ENCODE measurements at regions of chr7 and their contacts with region 1.

Region 1: DNA sequence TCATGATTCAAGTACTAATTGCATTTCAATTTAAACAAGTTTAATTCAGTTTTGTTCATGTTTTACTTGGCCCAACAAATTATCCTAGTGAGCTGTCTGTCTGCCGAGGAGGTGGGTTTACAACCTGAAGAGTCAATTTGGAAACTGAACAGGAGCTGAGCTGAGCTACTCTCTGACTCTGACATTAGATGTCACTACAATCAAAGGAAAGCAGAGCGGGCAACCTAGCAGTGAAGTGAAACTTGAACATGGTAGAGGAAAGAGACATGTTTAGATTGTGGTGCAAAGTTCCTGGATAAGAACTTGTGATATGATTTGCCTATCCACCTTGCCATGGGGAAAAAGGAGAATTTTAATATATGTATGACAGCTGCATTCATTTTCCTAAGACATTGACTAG is 9.6 kb upstream of the AGR3 start:
- DNase-seq: peak; percentile 64 to 74
- H3K4me3 ChIP-seq: no peak overlapping the region
- H3K4me3 Mint-ChIP-seq: no peak overlapping the region
- H3K27ac Mint-ChIP-seq: peak overlapping the region; percentile 35
- H3K4me1 ChIP-seq: peaks cover 31% of the 10 kb centered on the region
- H3K4me1 Mint-ChIP-seq: peaks cover 14% of the 10 kb centered on the region
- H3K27me3 ChIP-seq: no peaks in the 10 kb centered on the region
- H3K27me3 Mint-ChIP-seq: no peaks in the 10 kb centered on the region
- CTCF ChIP-seq: peak; percentile 46 to 75

Region 2: DNA sequence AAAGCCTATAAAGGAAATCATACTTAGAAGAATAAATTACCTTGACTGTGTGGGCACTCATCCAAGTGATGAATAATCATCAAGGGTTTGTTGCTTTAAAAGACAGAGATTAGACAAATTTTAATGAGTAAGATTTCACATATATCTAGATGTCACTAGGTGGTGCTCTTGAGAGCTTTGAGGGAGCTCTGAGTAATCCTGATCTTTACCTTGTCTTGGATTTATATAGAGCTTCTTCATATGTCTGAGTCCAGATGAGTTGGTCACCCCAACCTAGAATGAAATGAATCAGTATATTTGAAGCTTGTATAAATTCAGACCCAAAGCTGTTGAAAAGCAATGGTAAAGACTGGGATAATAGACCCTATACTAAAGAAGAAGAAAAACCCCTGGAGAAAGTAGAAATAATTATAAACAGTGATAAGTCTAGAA is 90.2 kb before region 1 on chr7:
- CTCF ChIA-PET with region 1: interaction called, 17 read pairs
- POLR2A ChIA-PET with region 1: interaction called, 4 read pairs
- intact Hi-C with region 1: loop called (anchors 1 kb)
- DNase-seq: peak in 1 of 2 experiments; percentile 44
- H3K4me3 ChIP-seq: no peak overlapping the region
- H3K4me3 Mint-ChIP-seq: peak overlapping the region; percentile 20
- H3K27ac Mint-ChIP-seq: peak overlapping the region; percentile 13
- H3K4me1 ChIP-seq: peaks cover 29% of the 10 kb centered on the region
- H3K4me1 Mint-ChIP-seq: peaks cover 16% of the 10 kb centered on the region
- H3K27me3 ChIP-seq: no peaks in the 10 kb centered on the region
- H3K27me3 Mint-ChIP-seq: no peaks in the 10 kb centered on the region
- CTCF ChIP-seq: peak in 1 of 2 experiments; percentile 54

Region 3: GRCh38 chr7:16905300-16906044 is 14.1 kb after region 1 on chr7:
- CTCF ChIA-PET with region 1: interaction called, 5 read pairs
- POLR2A ChIA-PET with region 1: no interaction called
- intact Hi-C with region 1: loop called (anchors 1 kb)
- DNase-seq: peak; percentile 57 to 59
- H3K4me3 ChIP-seq: no peak overlapping the region
- H3K4me3 Mint-ChIP-seq: peak overlapping the region; percentile 43
- H3K27ac Mint-ChIP-seq: peak overlapping the region; percentile 16
- H3K4me1 ChIP-seq: peaks cover 21% of the 10 kb centered on the region
- H3K4me1 Mint-ChIP-seq: peaks cover 35% of the 10 kb centered on the region
- H3K27me3 ChIP-seq: no peaks in the 10 kb centered on the region
- H3K27me3 Mint-ChIP-seq: no peaks in the 10 kb centered on the region
- CTCF ChIP-seq: no peak

Measured in Caco-2 (cell line).